ENCODE measurements at regions of chr10 and their contacts with region 1.

Region 1: GRCh38 chr10:102132563-102133372 is at the start of gene PPRC1:
- DNase-seq: peak; percentile 88 to 98 (median 97)
- ATAC-seq: peak; percentile 97
- H3K4me3 ChIP-seq: peak within 1 kb of the TSS; percentile 80
- H3K4me3 Mint-ChIP-seq: peak within 1 kb of the TSS; percentile 90 to 99 (median 98)
- H3K27ac ChIP-seq: peak within 1 kb of the TSS; percentile 89
- H3K27ac Mint-ChIP-seq: peak within 1 kb of the TSS; percentile 89 to 99 (median 96)
- H3K4me1 ChIP-seq: peaks cover 15 to 26% of the 10 kb centered on the region in 2 donors
- H3K4me1 Mint-ChIP-seq: peaks cover 29 to 53% (median 47%) of the 10 kb centered on the region in 7 donors
- H3K27me3 ChIP-seq: no peaks in the 10 kb centered on the region
- H3K27me3 Mint-ChIP-seq: no peaks in the 10 kb centered on the region
- total RNA-seq, gene PPRC1: 33.7 to 56.5 (median 40.6) TPM

Region 2: DNA sequence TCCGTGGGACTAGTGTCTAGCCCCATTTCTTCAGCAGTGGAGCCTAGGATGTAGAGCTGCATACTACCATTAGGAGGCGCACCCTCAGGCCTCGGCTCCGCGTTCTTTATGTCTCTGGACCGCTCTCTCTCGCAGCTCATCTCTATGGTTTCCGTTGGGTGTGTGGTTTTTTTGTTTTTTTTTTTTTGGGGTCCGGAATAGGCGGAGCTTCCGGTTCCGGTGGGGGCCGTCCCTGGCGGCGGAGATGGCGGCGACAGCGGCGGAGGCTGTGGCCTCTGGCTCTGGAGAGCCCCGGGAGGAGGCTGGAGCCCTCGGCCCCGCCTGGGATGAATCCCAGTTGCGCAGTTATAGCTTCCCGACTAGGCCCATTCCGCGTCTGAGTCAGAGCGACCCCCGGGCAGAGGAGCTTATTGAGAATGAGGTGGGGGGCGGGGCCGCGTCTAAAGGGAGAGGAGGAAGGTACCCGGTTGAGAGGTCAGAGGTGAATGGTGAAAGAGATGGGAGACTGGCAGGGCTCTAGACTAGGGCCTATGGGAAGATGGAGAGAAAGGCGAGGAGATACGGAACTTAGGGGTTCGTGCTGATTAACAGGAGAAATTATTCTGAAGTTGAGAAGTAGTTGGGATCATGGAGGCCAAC is 1596.9 kb before region 1 on chr10 and contains the start of gene HIF1AN:
- CTCF ChIA-PET with region 1: no interaction called
- POLR2A ChIA-PET with region 1: no interaction called
- intact Hi-C with region 1: no loop called
- DNase-seq: peak; percentile 70 to 95 (median 91)
- ATAC-seq: peak; percentile 100
- H3K4me3 ChIP-seq: peak within 1 kb of the TSS; percentile 73
- H3K4me3 Mint-ChIP-seq: peak within 1 kb of the TSS in 1 of 10 donors; percentile 9
- H3K27ac ChIP-seq: peak within 1 kb of the TSS; percentile 85
- H3K27ac Mint-ChIP-seq: peak within 1 kb of the TSS in 1 of 9 donors; percentile 57
- H3K4me1 ChIP-seq: peaks cover 24 to 27% of the 10 kb centered on the region in 2 donors
- H3K4me1 Mint-ChIP-seq: peaks cover 0 to 29% (median 10%) of the 10 kb centered on the region in 7 donors
- H3K27me3 ChIP-seq: no peaks in the 10 kb centered on the region
- H3K27me3 Mint-ChIP-seq: no peaks in the 10 kb centered on the region
- total RNA-seq, gene HIF1AN: 43.3 to 74.9 (median 54.8) TPM

Region 3: GRCh38 chr10:100912605-100913469 is 1219.9 kb before region 1 on chr10 and contains the start of gene SLF2:
- CTCF ChIA-PET with region 1: no interaction called
- POLR2A ChIA-PET with region 1: no interaction called
- intact Hi-C with region 1: loop called in 1 of 2 experiments (anchors 5 kb)
- DNase-seq: peak; percentile 69 to 91 (median 88)
- ATAC-seq: peak; percentile 96
- H3K4me3 ChIP-seq: peak within 1 kb of the TSS; percentile 96
- H3K4me3 Mint-ChIP-seq: peak within 1 kb of the TSS; percentile 91 to 100 (median 99)
- H3K27ac ChIP-seq: peak within 1 kb of the TSS; percentile 89
- H3K27ac Mint-ChIP-seq: peak within 1 kb of the TSS; percentile 88 to 99 (median 97)
- H3K4me1 ChIP-seq: peaks cover 12 to 13% of the 10 kb centered on the region in 2 donors
- H3K4me1 Mint-ChIP-seq: peaks cover 22 to 63% (median 60%) of the 10 kb centered on the region in 7 donors
- H3K27me3 ChIP-seq: no peaks in the 10 kb centered on the region
- H3K27me3 Mint-ChIP-seq: no peaks in the 10 kb centered on the region
- total RNA-seq, gene SLF2: 20.1 to 43.7 (median 38.8) TPM

Region 4: GRCh38 chr10:101848894-101849351 is 283.8 kb before region 1 on chr10:
- CTCF ChIA-PET with region 1: no interaction called
- POLR2A ChIA-PET with region 1: no interaction called
- intact Hi-C with region 1: no loop called
- DNase-seq: peak in 1 of 9 donors; percentile 4
- ATAC-seq: peak; percentile 63
- H3K4me3 ChIP-seq: no peak overlapping the region
- H3K4me3 Mint-ChIP-seq: no peak overlapping the region
- H3K27ac ChIP-seq: no peak overlapping the region
- H3K27ac Mint-ChIP-seq: no peak overlapping the region
- H3K4me1 ChIP-seq: peaks cover 0 to 9% of the 10 kb centered on the region in 2 donors
- H3K4me1 Mint-ChIP-seq: peaks cover 8 to 22% (median 13%) of the 10 kb centered on the region in 7 donors
- H3K27me3 ChIP-seq: no peaks in the 10 kb centered on the region
- H3K27me3 Mint-ChIP-seq: peaks cover 0 to 8% (median 4%) of the 10 kb centered on the region in 5 donors

Region 5: GRCh38 chr10:102064868-102065560 is 67.8 kb before region 1 on chr10 and contains the start of gene HPS6:
- CTCF ChIA-PET with region 1: interaction called, 4 read pairs
- POLR2A ChIA-PET with region 1: interaction called, 3 read pairs
- intact Hi-C with region 1: loop called in 1 of 2 experiments (anchors 1 kb)
- DNase-seq: peak; percentile 73 to 94 (median 81)
- ATAC-seq: peak; percentile 98
- H3K4me3 ChIP-seq: peak within 1 kb of the TSS; percentile 82
- H3K4me3 Mint-ChIP-seq: peak within 1 kb of the TSS; percentile 79 to 91 (median 89)
- H3K27ac ChIP-seq: peak within 1 kb of the TSS; percentile 93
- H3K27ac Mint-ChIP-seq: peak within 1 kb of the TSS; percentile 85 to 97 (median 93)
- H3K4me1 ChIP-seq: peaks cover 14 to 23% of the 10 kb centered on the region in 2 donors
- H3K4me1 Mint-ChIP-seq: peaks cover 23 to 43% (median 36%) of the 10 kb centered on the region in 7 donors
- H3K27me3 ChIP-seq: no peaks in the 10 kb centered on the region
- H3K27me3 Mint-ChIP-seq: no peaks in the 10 kb centered on the region
- total RNA-seq, gene HPS6: 12.1 to 24.2 (median 20.9) TPM

Region 6: GRCh38 chr10:102167861-102168260 is 35.1 kb after region 1 on chr10:
- CTCF ChIA-PET with region 1: interaction called, 4 read pairs
- POLR2A ChIA-PET with region 1: no interaction called
- intact Hi-C with region 1: loop called in 1 of 2 experiments (anchors 1 kb)
- DNase-seq: no peak
- ATAC-seq: no peak
- H3K4me3 ChIP-seq: no peak overlapping the region
- H3K4me3 Mint-ChIP-seq: peak overlapping the region in 1 of 10 donors; percentile 45
- H3K27ac ChIP-seq: no peak overlapping the region
- H3K27ac Mint-ChIP-seq: no peak overlapping the region
- H3K4me1 ChIP-seq: peaks cover 0 to 8% of the 10 kb centered on the region in 2 donors
- H3K4me1 Mint-ChIP-seq: peaks cover 0 to 20% (median 8%) of the 10 kb centered on the region in 7 donors
- H3K27me3 ChIP-seq: no peaks in the 10 kb centered on the region
- H3K27me3 Mint-ChIP-seq: peaks cover 0 to 5% (median 0%) of the 10 kb centered on the region in 5 donors

Region 7: DNA sequence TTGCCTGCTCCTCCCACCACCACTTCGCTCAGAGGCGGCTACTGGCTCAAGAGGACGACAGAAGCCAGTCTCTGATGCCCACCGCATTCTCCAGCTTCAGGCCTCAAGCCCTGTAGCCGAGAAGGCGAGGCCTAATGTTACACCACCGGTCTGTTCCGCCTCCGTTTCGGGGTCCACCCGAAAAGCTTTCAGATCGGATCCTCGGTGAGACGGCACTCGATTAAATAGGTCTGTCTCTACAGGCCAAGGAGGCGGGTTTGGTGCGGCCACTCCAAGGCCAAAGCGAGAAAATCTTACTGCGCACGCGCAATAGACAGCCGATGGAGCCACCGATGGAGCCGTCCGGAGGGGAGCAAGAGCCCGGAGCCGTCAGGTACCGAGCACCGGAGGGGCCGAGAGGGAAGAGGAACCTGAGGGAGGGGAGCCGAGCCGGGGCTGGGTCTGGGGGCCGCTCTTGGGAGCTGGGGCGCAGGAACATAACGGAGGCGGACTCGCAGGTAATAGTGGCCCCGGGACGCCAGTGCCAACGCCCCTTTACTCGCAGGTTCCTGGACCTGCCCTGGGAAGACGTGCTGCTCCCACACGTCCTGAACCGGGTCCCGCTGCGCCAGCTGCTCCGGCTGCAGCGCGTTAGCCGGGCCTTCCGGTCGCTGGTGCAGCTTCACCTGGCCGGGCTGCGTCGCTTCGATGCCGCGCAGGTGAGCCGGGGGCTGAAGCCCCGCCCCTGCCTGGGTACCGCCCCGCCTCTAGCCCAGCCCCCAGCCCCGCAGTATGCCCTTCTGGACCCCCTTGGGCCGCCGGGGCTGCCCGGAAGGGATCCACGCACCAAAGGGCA is 288.3 kb after region 1 on chr10 and contains the start of gene FBXL15:
- CTCF ChIA-PET with region 1: no interaction called
- POLR2A ChIA-PET with region 1: interaction called, 3 read pairs
- intact Hi-C with region 1: loop called (anchors 1 kb)
- DNase-seq: peak; percentile 82 to 96 (median 90)
- ATAC-seq: peak; percentile 86
- H3K4me3 ChIP-seq: peak within 1 kb of the TSS; percentile 93
- H3K4me3 Mint-ChIP-seq: peak within 1 kb of the TSS; percentile 94 to 99 (median 98)
- H3K27ac ChIP-seq: peak within 1 kb of the TSS; percentile 75
- H3K27ac Mint-ChIP-seq: peak within 1 kb of the TSS; percentile 91 to 97 (median 95)
- H3K4me1 ChIP-seq: peaks cover 26 to 33% of the 10 kb centered on the region in 2 donors
- H3K4me1 Mint-ChIP-seq: peaks cover 17 to 46% (median 38%) of the 10 kb centered on the region in 7 donors
- H3K27me3 ChIP-seq: no peaks in the 10 kb centered on the region
- H3K27me3 Mint-ChIP-seq: peaks cover 17 to 26% (median 19%) of the 10 kb centered on the region in 5 donors
- total RNA-seq, gene FBXL15: 10.8 to 21.0 (median 14.1) TPM

Region 8: DNA sequence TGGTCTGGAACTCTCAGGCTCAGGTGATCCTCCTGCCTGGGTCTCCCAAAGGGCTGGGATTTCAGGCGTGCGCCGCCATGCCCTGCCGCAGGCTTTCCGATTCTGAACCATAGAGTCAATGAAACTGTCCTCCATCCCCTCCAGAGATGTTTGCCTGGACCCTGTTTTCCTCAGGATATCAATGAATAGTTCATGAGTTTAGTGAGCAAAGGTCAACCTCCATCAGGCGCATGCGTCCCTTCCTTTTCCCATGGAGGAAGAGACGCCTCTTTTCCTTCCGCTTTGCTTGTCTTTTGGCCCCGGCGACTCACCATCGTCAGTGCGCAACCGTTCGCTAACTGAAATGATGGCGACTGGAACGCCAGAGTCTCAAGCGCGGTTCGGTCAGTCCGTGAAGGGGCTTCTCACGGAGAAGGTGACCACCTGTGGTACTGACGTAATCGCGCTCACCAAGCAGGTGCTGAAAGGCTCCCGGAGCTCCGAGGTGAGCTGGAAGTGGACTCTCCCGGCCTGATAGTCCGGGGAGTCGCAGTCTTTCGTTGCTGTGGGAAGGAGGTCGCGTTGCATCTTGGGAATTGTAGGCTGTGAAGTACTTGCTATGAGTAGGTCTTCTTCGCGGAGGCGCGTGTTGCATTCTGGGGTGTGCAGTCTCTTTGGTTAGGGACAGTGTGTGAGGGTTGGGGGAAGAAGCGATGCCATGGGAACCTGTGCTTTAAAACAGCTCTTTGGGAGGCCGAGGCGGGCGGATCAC is 721.4 kb after region 1 on chr10 and contains the start of gene BORCS7:
- CTCF ChIA-PET with region 1: no interaction called
- POLR2A ChIA-PET with region 1: no interaction called
- intact Hi-C with region 1: loop called (anchors 2 to 5 kb)
- DNase-seq: peak; percentile 69 to 91 (median 88)
- ATAC-seq: peak; percentile 100
- H3K4me3 ChIP-seq: peak within 1 kb of the TSS; percentile 100
- H3K4me3 Mint-ChIP-seq: peak within 1 kb of the TSS; percentile 84 to 99 (median 91)
- H3K27ac ChIP-seq: peak within 1 kb of the TSS; percentile 95
- H3K27ac Mint-ChIP-seq: peak within 1 kb of the TSS; percentile 96 to 99 (median 99)
- H3K4me1 ChIP-seq: no peaks in the 10 kb centered on the region
- H3K4me1 Mint-ChIP-seq: peaks cover 7 to 25% (median 15%) of the 10 kb centered on the region in 7 donors
- H3K27me3 ChIP-seq: no peaks in the 10 kb centered on the region
- H3K27me3 Mint-ChIP-seq: no peaks in the 10 kb centered on the region
- total RNA-seq, gene BORCS7: 11.6 to 20.2 (median 13.3) TPM